ENCODE measurements at regions of chr15 and their contacts with region 1.

Region 1: DNA sequence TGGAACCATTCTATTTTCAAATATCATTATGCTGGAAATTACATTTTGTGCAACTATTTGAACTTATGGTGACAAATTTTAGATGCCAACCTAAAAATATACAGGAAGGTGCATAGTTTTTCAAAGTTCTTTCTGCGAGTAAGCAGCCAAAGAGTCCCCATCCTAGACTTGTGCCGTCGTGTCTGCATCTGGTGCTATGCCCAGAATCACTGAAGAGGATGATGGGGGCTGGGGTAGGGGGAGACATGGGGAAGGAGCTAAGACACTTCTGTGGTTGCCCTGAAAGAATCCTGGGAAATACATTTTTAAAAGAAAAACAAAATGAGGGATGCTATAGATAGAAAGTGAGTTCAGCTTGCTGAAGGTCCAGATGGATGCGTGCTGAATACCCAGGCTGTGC is 21.2 kb upstream of the FAM81A start:
- DNase-seq: no peak
- ATAC-seq: no peak
- H3K4me3 ChIP-seq: no peak overlapping the region
- H3K27ac ChIP-seq: no peak overlapping the region
- H3K4me1 ChIP-seq: no peaks in the 10 kb centered on the region
- H3K27me3 ChIP-seq: peaks cover 0 to 7% (median 4%) of the 10 kb centered on the region in 3 donors
- CTCF ChIP-seq: no peak

Region 2: DNA sequence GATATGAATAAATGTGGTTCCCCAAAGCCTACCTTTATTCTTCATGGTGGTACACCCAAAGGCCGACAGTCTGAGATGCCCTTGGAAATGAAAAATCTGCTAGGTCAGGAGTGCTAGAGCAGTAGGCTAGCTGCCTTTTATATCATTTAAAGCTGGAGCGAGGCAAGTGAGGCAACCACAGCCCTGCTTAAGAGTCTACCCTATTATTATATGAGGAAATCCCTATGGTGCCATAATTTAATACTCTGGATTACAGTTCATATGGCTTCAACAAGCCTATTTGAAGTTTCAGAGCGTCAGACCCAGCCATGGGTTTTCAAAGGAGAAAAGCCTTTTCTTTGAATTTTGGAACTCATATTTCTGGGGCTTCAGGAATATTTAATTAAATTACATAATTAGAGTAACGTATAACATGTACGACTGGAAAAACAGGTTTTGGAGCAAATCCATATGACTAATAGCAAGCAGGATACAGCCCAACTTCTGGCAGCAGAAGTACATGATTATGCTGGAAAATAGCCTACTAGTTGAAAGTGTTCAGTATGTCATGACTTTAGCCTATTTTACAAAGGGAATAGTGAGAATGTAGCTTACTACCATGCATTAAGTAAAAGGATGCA is 465.3 kb before region 1 on chr15:
- intact Hi-C with region 1: no loop called
- DNase-seq: no peak
- ATAC-seq: no peak
- H3K4me3 ChIP-seq: no peak overlapping the region
- H3K27ac ChIP-seq: no peak overlapping the region
- H3K4me1 ChIP-seq: no peaks in the 10 kb centered on the region
- H3K27me3 ChIP-seq: no peaks in the 10 kb centered on the region
- CTCF ChIP-seq: no peak

Region 3: GRCh38 chr15:59380904-59381610 is 35.8 kb before region 1 on chr15:
- intact Hi-C with region 1: loop called in 1 of 2 experiments (anchors 1 kb)
- DNase-seq: no peak
- ATAC-seq: no peak
- H3K4me3 ChIP-seq: no peak overlapping the region
- H3K27ac ChIP-seq: no peak overlapping the region
- H3K4me1 ChIP-seq: no peaks in the 10 kb centered on the region
- H3K27me3 ChIP-seq: no peaks in the 10 kb centered on the region
- CTCF ChIP-seq: no peak

Region 4: DNA sequence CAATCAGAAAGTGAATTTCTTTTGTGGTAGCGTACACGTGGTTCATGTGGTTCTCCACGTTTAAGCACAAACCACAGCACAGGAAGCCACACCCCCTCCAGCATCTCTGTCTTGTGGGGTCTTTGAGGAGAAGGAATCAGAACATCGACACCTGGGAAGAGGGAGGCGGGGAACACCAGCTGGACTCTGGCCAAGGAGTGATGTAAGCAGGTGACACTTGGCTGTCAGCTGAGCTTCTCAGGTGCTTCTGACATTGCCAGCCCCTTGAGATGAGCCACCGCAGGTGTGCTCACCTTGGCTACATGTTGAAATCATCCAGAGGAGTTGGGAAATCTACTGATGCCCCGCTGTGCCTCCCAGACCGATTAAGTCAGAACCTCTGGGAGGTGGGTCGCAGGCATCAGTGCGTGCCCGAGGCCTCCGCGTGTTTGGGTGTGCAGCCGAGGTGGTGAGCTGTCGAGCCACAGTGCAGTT is 106.2 kb after region 1 on chr15:
- intact Hi-C with region 1: no loop called
- DNase-seq: no peak
- ATAC-seq: no peak
- H3K4me3 ChIP-seq: no peak overlapping the region
- H3K27ac ChIP-seq: no peak overlapping the region
- H3K4me1 ChIP-seq: no peaks in the 10 kb centered on the region
- H3K27me3 ChIP-seq: no peaks in the 10 kb centered on the region
- CTCF ChIP-seq: no peak